ENCODE measurements at regions of chr17 and their contacts with region 1.

Region 1: DNA sequence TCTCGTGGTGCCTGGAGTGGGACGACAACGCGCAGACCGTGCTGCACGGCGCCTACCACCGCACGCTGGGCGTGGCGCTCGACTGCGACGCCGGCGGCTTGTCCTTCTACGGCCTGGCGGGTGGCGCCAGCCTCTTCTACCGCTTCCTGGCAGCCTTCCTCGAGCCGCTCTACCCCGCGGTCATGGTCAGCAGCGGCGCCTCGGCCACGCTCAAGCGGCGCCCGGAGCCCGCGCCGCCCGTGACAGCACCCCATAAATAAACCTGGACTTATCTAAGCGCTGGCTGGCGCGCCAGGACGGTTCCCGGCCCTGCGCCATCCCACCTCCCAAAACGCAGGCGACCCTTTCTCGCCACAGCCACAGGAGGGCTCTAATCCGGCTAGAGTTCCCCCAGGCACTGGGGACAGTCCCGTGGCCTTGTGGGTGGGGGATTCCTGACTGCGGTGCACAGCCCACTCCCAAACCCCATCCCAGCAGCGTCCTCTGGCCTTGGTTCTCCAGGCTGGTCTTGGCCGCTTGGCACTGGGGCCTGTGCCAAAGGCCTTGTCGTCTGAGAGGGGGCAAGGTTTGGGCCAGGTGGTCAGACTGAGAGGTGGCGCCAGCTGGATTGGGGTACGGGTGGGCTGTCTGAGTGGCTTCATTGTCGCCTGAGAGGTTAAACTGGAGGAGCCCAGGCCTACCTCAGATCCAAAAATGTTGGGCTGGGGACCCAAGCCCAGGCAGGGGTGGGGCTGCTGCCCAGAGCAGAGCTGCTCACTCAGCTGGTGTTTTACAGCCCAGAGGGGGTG is 10.1 kb upstream of the SLC16A5 start:
- DNase-seq: peak; percentile 23 to 52 (median 46)
- H3K4me3 ChIP-seq: peak overlapping the region in 1 of 2 donors; percentile 27
- H3K4me3 Mint-ChIP-seq: peak overlapping the region; percentile 41 to 79 (median 68)
- H3K27ac ChIP-seq: peak overlapping the region; percentile 10
- H3K27ac Mint-ChIP-seq: peak overlapping the region in 4 of 7 donors; percentile 36 to 68 (median 58)
- H3K4me1 ChIP-seq: peaks cover 27% of the 10 kb centered on the region
- H3K4me1 Mint-ChIP-seq: peaks cover 0 to 27% (median 11%) of the 10 kb centered on the region in 4 donors
- H3K27me3 ChIP-seq: no peaks in the 10 kb centered on the region
- H3K27me3 Mint-ChIP-seq: no peaks in the 10 kb centered on the region

Region 2: GRCh38 chr17:75087558-75088453 is 10.1 kb after region 1 on chr17 and contains the start of gene SLC16A5:
- CTCF ChIA-PET with region 1: interaction called, 4 read pairs
- POLR2A ChIA-PET with region 1: interaction called, 26 read pairs
- intact Hi-C with region 1: no loop called
- DNase-seq: peak; percentile 42 to 58 (median 45)
- H3K4me3 ChIP-seq: peak within 1 kb of the TSS; percentile 65 to 68
- H3K4me3 Mint-ChIP-seq: peak within 1 kb of the TSS; percentile 82 to 90 (median 84)
- H3K27ac ChIP-seq: peak within 1 kb of the TSS; percentile 64
- H3K27ac Mint-ChIP-seq: peak within 1 kb of the TSS; percentile 35 to 97 (median 81)
- H3K4me1 ChIP-seq: peaks cover 32% of the 10 kb centered on the region
- H3K4me1 Mint-ChIP-seq: peaks cover 36 to 64% (median 49%) of the 10 kb centered on the region in 4 donors
- H3K27me3 ChIP-seq: no peaks in the 10 kb centered on the region
- H3K27me3 Mint-ChIP-seq: no peaks in the 10 kb centered on the region
- total RNA-seq, gene SLC16A5: 12.5 to 13.9 TPM

Measured in CD4-positive, alpha-beta memory T cell (primary cell).